GM13976 (cell line): ENCODE measurements at regions of chrX and their contacts with region 1.

Region 1: GRCh38 chrX:15349046-15349445 is 13.7 kb upstream of the PIGA start:
- DNase-seq: peak; percentile 35
- CTCF ChIP-seq: peak; percentile 40

Region 2: GRCh38 chrX:15471016-15471415 is 122.0 kb after region 1 on chrX:
- in situ Hi-C with region 1: loop called (anchors 10 kb)
- DNase-seq: peak; percentile 51
- CTCF ChIP-seq: peak; percentile 69

Region 3: GRCh38 chrX:15579778-15580747 is 231.0 kb after region 1 on chrX:
- in situ Hi-C with region 1: loop called (anchors 10 kb)
- DNase-seq: no peak
- CTCF ChIP-seq: no peak